Activated B cell treated with CpG ODN at 0.5 μM for 24 hours (primary cell): ENCODE measurements at regions of chr2 and their contacts with region 1.

Region 1: GRCh38 chr2:64383016-64383591 is 70.9 kb upstream of the LGALSL start:
- DNase-seq: no peak
- ATAC-seq: no peak
- H3K4me3 Mint-ChIP-seq: no peak overlapping the region
- H3K27ac Mint-ChIP-seq: no peak overlapping the region
- H3K4me1 Mint-ChIP-seq: no peaks in the 10 kb centered on the region
- H3K27me3 Mint-ChIP-seq: peaks cover 4% of the 10 kb centered on the region
- CTCF ChIP-seq: no peak

Region 2: GRCh38 chr2:64371727-64372126 is 11.4 kb before region 1 on chr2:
- CTCF ChIA-PET with region 1: no interaction called
- POLR2A ChIA-PET with region 1: interaction called, 13 read pairs
- intact Hi-C with region 1: no loop called
- DNase-seq: no peak
- ATAC-seq: no peak
- H3K4me3 Mint-ChIP-seq: no peak overlapping the region
- H3K27ac Mint-ChIP-seq: no peak overlapping the region
- H3K4me1 Mint-ChIP-seq: no peaks in the 10 kb centered on the region
- H3K27me3 Mint-ChIP-seq: no peaks in the 10 kb centered on the region
- CTCF ChIP-seq: no peak